CD8-positive, alpha-beta memory T cell (primary cell): ENCODE measurements at regions of chr1 and their contacts with region 1.

Region 1: GRCh38 chr1:37486680-37487618 is 12.6 kb downstream of the ZC3H12A start:
- DNase-seq: peak; percentile 69 to 83 (median 74)
- H3K4me3 ChIP-seq: no peak overlapping the region
- H3K4me3 Mint-ChIP-seq: no peak overlapping the region
- H3K27ac ChIP-seq: no peak overlapping the region
- H3K27ac Mint-ChIP-seq: peak overlapping the region; percentile 59 to 95 (median 77)
- H3K4me1 ChIP-seq: peaks cover 8% of the 10 kb centered on the region
- H3K4me1 Mint-ChIP-seq: peaks cover 12 to 31% (median 15%) of the 10 kb centered on the region in 3 donors
- H3K27me3 ChIP-seq: no peaks in the 10 kb centered on the region
- H3K27me3 Mint-ChIP-seq: no peaks in the 10 kb centered on the region

Region 2: GRCh38 chr1:37458528-37458927 is 28.4 kb before region 1 on chr1:
- CTCF ChIA-PET with region 1: interaction called, 246 read pairs
- POLR2A ChIA-PET with region 1: no interaction called
- DNase-seq: no peak
- H3K4me3 ChIP-seq: no peak overlapping the region
- H3K4me3 Mint-ChIP-seq: no peak overlapping the region
- H3K27ac ChIP-seq: no peak overlapping the region
- H3K27ac Mint-ChIP-seq: peak overlapping the region in 2 of 8 donors; percentile 33 to 64
- H3K4me1 ChIP-seq: peaks cover 3% of the 10 kb centered on the region
- H3K4me1 Mint-ChIP-seq: peaks cover 6 to 11% (median 9%) of the 10 kb centered on the region in 3 donors
- H3K27me3 ChIP-seq: no peaks in the 10 kb centered on the region
- H3K27me3 Mint-ChIP-seq: no peaks in the 10 kb centered on the region

Region 3: GRCh38 chr1:37474046-37474759 is 12.7 kb before region 1 on chr1 and contains the start of gene ZC3H12A:
- CTCF ChIA-PET with region 1: interaction called, 160 read pairs
- POLR2A ChIA-PET with region 1: interaction called, 45 read pairs
- DNase-seq: peak; percentile 89 to 95 (median 93)
- H3K4me3 ChIP-seq: peak within 1 kb of the TSS; percentile 99
- H3K4me3 Mint-ChIP-seq: peak within 1 kb of the TSS; percentile 93 to 98 (median 95)
- H3K27ac ChIP-seq: peak within 1 kb of the TSS; percentile 98
- H3K27ac Mint-ChIP-seq: peak within 1 kb of the TSS; percentile 97 to 100 (median 99)
- H3K4me1 ChIP-seq: peaks cover 55% of the 10 kb centered on the region
- H3K4me1 Mint-ChIP-seq: peaks cover 54 to 57% (median 54%) of the 10 kb centered on the region in 3 donors
- H3K27me3 ChIP-seq: no peaks in the 10 kb centered on the region
- H3K27me3 Mint-ChIP-seq: peaks cover 0 to 3% of the 10 kb centered on the region in 2 donors
- total RNA-seq, gene ZC3H12A: 32.7 to 33.8 TPM

Region 4: DNA sequence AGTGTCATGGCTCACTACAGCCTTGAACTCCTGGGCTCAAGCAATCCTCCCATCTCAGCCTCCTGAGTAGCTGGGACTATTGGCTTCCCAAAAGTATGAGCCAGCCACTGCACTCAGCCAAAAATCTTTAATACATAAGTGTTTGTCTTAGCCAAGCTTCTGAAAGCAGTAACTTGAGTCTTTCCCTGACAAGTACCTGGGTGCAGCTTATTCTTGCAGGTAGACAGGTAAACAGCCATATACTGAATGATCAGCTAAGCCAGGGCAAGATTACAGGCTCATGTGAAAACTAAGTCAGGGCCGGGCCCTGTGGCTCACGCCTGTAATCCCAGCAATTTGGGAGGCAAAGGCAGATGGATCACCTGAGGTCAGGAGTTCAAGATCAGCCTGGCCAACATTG is 19.8 kb after region 1 on chr1:
- CTCF ChIA-PET with region 1: interaction called, 13 read pairs
- POLR2A ChIA-PET with region 1: interaction called, 3 read pairs
- DNase-seq: no peak
- H3K4me3 ChIP-seq: no peak overlapping the region
- H3K4me3 Mint-ChIP-seq: no peak overlapping the region
- H3K27ac ChIP-seq: no peak overlapping the region
- H3K27ac Mint-ChIP-seq: peak overlapping the region in 2 of 8 donors; percentile 17 to 58
- H3K4me1 ChIP-seq: peaks cover 7% of the 10 kb centered on the region
- H3K4me1 Mint-ChIP-seq: peaks cover 16 to 41% (median 30%) of the 10 kb centered on the region in 3 donors
- H3K27me3 ChIP-seq: no peaks in the 10 kb centered on the region
- H3K27me3 Mint-ChIP-seq: no peaks in the 10 kb centered on the region

Region 5: DNA sequence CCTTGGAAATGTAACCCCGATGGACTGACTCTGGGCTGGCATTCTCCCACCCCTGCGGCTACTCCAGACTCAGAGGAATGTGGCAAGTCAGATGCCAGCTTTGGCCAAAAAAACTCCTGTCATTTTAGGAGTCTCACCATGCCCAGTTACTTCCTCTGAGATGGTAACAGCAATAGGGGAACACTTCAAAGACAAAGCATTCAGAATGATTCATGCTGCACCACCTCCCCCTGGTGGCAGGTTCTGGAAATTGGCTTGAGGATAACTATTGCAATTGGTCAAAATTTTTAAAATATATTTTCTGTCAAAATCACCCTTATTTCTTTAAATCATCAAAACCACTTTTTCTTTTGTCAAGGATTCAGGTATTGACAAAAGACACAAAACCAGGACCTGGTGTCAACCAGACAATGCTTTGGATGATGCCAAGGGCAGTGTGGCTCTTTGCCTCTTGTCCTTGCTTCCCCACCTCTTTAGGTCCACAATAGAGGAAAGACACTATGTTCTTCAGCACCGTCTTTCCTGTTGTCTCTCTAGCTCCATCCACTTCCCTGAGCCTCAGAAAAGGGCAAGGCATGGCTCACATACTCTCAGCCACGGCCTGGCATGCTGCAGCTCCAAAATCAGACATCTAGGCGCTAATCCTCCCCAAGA is 195.5 kb after region 1 on chr1:
- CTCF ChIA-PET with region 1: interaction called, 10 read pairs
- POLR2A ChIA-PET with region 1: no interaction called
- DNase-seq: peak; percentile 60 to 81 (median 68)
- H3K4me3 ChIP-seq: no peak overlapping the region
- H3K4me3 Mint-ChIP-seq: no peak overlapping the region
- H3K27ac ChIP-seq: no peak overlapping the region
- H3K27ac Mint-ChIP-seq: peak overlapping the region; percentile 34 to 83 (median 68)
- H3K4me1 ChIP-seq: no peaks in the 10 kb centered on the region
- H3K4me1 Mint-ChIP-seq: peaks cover 0 to 4% (median 4%) of the 10 kb centered on the region in 3 donors
- H3K27me3 ChIP-seq: no peaks in the 10 kb centered on the region
- H3K27me3 Mint-ChIP-seq: no peaks in the 10 kb centered on the region

Region 6: GRCh38 chr1:37965301-37965700 is 478.4 kb after region 1 on chr1:
- CTCF ChIA-PET with region 1: no interaction called
- POLR2A ChIA-PET with region 1: no interaction called
- DNase-seq: no peak
- H3K4me3 ChIP-seq: no peak overlapping the region
- H3K4me3 Mint-ChIP-seq: no peak overlapping the region
- H3K27ac ChIP-seq: no peak overlapping the region
- H3K27ac Mint-ChIP-seq: peak overlapping the region in 1 of 8 donors; percentile 29
- H3K4me1 ChIP-seq: no peaks in the 10 kb centered on the region
- H3K4me1 Mint-ChIP-seq: no peaks in the 10 kb centered on the region
- H3K27me3 ChIP-seq: no peaks in the 10 kb centered on the region
- H3K27me3 Mint-ChIP-seq: no peaks in the 10 kb centered on the region